Activated T-helper 1 cell treated with anti-CD3 and anti-CD28 coated beads, Interleukin-12 subunit alpha, Interleukin-12 subunit beta, Interleukin-2, Interleukin-4 antibody, amounts not matched to agents 30 ng/mL and 10 ng/mL and 1 ng/mL, durations not matched to agents 14 hours and 24 hours and 36 hours (primary cell): ENCODE measurements at regions of chr1 and their contacts with region 1.

Region 1: GRCh38 chr1:101309334-101310311 is 72.8 kb downstream of the S1PR1 start:
- DNase-seq: peak; percentile 62
- H3K4me3 Mint-ChIP-seq: peak overlapping the region; percentile 80
- H3K27ac Mint-ChIP-seq: peak overlapping the region; percentile 75
- H3K4me1 Mint-ChIP-seq: peaks cover 75% of the 10 kb centered on the region
- H3K27me3 Mint-ChIP-seq: peaks cover 8% of the 10 kb centered on the region

Region 2: DNA sequence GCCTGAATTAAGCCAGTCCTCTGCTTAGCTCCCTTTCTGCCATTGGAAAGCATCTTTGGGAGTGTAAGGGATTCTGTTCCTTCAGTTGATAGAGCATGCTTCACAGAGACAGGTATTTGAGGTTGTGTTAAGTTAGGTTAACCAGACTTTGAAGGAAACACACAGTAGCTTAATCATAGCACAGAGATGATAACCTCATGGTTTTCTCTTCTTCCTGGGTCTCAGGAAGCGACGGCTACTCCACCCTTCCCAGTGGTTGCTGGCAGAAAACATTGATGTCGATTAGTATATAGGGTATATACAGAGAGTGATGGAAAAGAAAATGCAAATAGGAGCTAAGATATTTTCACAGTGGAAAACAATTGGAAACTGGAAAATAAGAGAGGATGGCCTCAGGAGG is 30.8 kb before region 1 on chr1:
- intact Hi-C with region 1: no loop called
- DNase-seq: no peak
- H3K4me3 Mint-ChIP-seq: peak overlapping the region; percentile 32
- H3K27ac Mint-ChIP-seq: no peak overlapping the region
- H3K4me1 Mint-ChIP-seq: peaks cover 63% of the 10 kb centered on the region
- H3K27me3 Mint-ChIP-seq: no peaks in the 10 kb centered on the region

Region 3: DNA sequence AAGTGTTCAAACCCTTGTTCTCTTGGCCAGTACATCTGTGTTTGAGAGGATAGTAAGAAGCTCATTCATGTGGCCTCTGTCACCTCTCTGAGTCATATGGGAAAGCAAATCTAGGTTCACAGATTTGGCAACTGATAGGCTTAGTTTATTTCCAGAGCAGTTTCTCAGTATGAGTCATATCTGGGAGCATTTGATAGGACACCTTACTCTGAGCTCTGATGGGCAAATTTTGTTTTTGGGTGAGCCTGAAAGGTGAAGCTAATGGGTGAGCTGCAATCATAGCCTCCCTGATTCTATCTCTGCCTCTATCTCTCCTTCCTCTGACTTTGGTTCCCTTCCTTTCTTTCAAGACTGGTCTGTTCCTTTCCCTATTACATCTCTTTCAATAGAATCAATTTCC is 61.6 kb after region 1 on chr1:
- intact Hi-C with region 1: loop called (anchors 1 kb)
- DNase-seq: peak; percentile 33
- H3K4me3 Mint-ChIP-seq: peak overlapping the region; percentile 40
- H3K27ac Mint-ChIP-seq: no peak overlapping the region
- H3K4me1 Mint-ChIP-seq: peaks cover 12% of the 10 kb centered on the region
- H3K27me3 Mint-ChIP-seq: peaks cover 14% of the 10 kb centered on the region

Region 4: DNA sequence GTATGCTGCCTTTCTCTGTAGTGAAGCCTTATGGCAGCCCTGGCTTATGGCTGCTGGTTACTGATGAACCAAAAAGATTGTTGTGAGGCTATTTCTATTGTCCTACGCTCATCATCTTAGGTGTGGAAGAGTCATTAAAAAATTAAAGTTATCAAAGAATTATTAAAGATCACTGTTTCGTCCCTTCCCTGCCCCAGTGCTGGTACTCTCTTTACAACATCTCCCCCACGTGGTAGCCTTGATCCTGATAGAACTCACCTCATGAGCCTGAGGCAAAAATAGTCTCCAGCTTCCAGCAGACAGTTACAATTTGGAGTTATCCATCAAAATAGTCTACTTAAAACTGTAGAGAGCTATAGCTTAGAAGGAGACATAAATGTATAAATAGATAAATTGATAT is 128.7 kb after region 1 on chr1:
- intact Hi-C with region 1: loop called (anchors 1 kb)
- DNase-seq: no peak
- H3K4me3 Mint-ChIP-seq: no peak overlapping the region
- H3K27ac Mint-ChIP-seq: no peak overlapping the region
- H3K4me1 Mint-ChIP-seq: no peaks in the 10 kb centered on the region
- H3K27me3 Mint-ChIP-seq: peaks cover 30% of the 10 kb centered on the region

Region 5: GRCh38 chr1:101506541-101507164 is 197.0 kb after region 1 on chr1:
- intact Hi-C with region 1: loop called (anchors 2 kb)
- DNase-seq: peak; percentile 4
- H3K4me3 Mint-ChIP-seq: no peak overlapping the region
- H3K27ac Mint-ChIP-seq: no peak overlapping the region
- H3K4me1 Mint-ChIP-seq: no peaks in the 10 kb centered on the region
- H3K27me3 Mint-ChIP-seq: peaks cover 20% of the 10 kb centered on the region